ENCODE measurements at regions of chr11 and their contacts with region 1.

Region 1: DNA sequence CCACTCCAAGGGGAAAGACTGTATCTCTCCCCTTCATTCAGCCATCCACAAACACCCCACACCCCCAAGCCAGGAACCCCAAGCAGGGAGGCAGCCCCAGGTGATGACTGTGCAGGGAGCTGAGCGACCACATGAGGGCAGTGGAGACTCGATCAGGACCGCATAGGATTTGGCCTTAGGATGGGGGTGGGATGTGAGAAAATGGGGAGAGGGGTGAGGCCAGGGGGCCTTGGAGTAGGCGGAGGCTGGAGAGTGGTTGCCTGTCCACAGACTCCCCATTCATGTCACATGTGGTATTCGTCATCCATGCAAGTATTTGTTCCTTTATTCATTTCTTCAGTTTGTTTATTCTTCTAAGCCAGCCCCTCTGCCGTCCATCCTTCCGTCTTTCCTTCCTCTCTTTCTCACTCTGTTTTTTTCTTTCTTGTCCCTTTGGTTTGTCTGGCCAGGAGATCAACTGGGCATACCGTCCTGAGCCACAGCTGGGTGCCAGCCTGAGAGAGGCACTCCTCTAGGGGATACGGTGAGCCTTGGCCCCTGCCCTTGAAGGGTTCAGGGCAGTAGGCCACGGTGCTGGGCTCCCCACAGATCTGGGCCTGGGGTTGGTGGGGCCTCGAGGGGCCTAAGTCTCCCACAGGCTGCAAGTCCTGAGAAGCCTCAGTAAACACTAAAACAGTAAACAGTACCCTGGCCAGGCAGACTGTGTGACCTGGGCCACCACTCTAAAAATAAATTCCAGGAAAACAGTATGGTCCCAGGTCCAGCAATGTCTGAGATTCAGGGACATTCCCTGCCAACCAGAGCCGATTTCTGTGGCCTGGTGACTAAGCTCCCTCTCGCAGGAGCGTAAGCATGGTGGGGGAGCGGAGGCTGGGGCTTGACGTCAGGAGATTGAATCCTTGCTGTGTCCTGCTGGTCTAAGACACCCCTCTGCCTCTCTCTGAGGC is 2.5 kb upstream of the RHOD start:
- DNase-seq: peak; percentile 71
- H3K4me3 ChIP-seq: no peak overlapping the region
- H3K27ac ChIP-seq: no peak overlapping the region
- H3K4me1 ChIP-seq: peaks cover 12% of the 10 kb centered on the region
- H3K27me3 ChIP-seq: no peaks in the 10 kb centered on the region
- CTCF ChIP-seq: peak; percentile 93

Region 2: GRCh38 chr11:67118801-67119584 is 64.8 kb after region 1 on chr11 and contains the start of gene KDM2A:
- CTCF ChIA-PET with region 1: interaction called, 17 read pairs
- POLR2A ChIA-PET with region 1: no interaction called
- intact Hi-C with region 1: no loop called
- DNase-seq: peak; percentile 100
- H3K4me3 ChIP-seq: peak within 1 kb of the TSS; percentile 85
- H3K27ac ChIP-seq: peak within 1 kb of the TSS; percentile 93
- H3K4me1 ChIP-seq: peaks cover 10% of the 10 kb centered on the region
- H3K27me3 ChIP-seq: no peaks in the 10 kb centered on the region
- CTCF ChIP-seq: no peak
- total RNA-seq, gene KDM2A: 105 and 121 TPM in 2 replicates

Region 3: GRCh38 chr11:67252831-67253239 is 198.7 kb after region 1 on chr11:
- CTCF ChIA-PET with region 1: no interaction called
- POLR2A ChIA-PET with region 1: no interaction called
- intact Hi-C with region 1: loop called (anchors 10 kb)
- DNase-seq: peak; percentile 67
- H3K4me3 ChIP-seq: no peak overlapping the region
- H3K27ac ChIP-seq: no peak overlapping the region
- H3K4me1 ChIP-seq: no peaks in the 10 kb centered on the region
- H3K27me3 ChIP-seq: no peaks in the 10 kb centered on the region
- CTCF ChIP-seq: peak; percentile 58

Region 4: DNA sequence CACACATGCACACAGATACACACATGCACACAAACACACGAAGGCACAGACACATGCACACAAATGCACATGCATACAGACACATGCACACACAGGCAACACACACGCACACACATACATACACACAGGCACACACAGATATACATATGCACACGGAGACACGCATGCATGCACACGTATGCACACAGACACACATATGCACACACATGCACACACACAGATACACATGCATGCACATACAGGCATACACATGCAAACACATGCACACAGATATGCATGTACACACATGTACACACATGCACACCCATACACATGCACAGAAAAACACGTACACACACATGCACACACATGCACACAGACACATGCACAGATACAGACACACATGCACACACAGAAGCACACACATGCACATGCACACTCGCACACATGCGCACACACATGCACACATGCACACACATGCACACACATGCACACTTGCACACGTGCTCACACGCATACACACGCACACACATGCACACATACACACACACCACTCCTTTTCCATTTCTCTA is 691.1 kb after region 1 on chr11:
- CTCF ChIA-PET with region 1: no interaction called
- POLR2A ChIA-PET with region 1: no interaction called
- intact Hi-C with region 1: no loop called
- DNase-seq: no peak
- H3K4me3 ChIP-seq: no peak overlapping the region
- H3K27ac ChIP-seq: no peak overlapping the region
- H3K4me1 ChIP-seq: no peaks in the 10 kb centered on the region
- H3K27me3 ChIP-seq: no peaks in the 10 kb centered on the region
- CTCF ChIP-seq: no peak

Measured in A673 (cell line).